Activated T-helper 1 cell treated with anti-CD3 and anti-CD28 coated beads, Interleukin-12 subunit alpha, Interleukin-12 subunit beta, Interleukin-2, Interleukin-4 antibody, amounts not matched to agents 30 ng/mL and 10 ng/mL and 1 ng/mL, durations not matched to agents 14 hours and 24 hours and 36 hours (primary cell): ENCODE measurements at regions of chr10 and their contacts with region 1.

Region 1: DNA sequence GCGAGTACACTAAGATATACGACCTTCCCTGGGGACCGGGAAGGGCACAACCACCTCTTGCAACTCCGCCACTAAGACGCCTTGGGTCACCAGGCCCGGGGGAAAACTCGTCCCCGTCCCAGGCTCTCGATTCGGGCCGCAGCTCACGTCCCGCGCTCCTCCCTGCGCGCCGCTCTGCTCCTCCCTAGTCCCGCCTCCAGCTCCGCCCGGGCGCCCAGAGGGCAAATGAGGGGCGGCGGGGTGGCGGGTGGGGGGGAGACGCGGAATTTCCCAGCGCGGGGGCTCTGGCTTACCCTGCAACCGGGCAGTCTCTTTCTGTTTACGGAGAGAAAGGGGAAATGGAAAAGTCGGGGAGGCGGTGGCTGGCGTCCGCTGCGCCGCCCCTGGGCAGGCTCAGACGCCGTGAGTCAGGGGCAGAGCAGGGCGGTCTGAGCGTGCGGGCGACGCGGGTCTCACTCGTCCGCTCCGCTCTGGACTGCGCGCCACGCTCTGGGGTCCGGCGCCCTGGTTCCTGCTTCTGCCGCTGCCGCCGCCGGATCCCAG is at the start of gene MAP3K8:
- DNase-seq: peak; percentile 87
- H3K4me3 Mint-ChIP-seq: peak within 1 kb of the TSS; percentile 94
- H3K27ac Mint-ChIP-seq: peak within 1 kb of the TSS; percentile 88
- H3K4me1 Mint-ChIP-seq: peaks cover 56% of the 10 kb centered on the region
- H3K27me3 Mint-ChIP-seq: no peaks in the 10 kb centered on the region
- total RNA-seq, gene MAP3K8: 34.7 and 37.5 TPM in 2 replicates

Region 2: DNA sequence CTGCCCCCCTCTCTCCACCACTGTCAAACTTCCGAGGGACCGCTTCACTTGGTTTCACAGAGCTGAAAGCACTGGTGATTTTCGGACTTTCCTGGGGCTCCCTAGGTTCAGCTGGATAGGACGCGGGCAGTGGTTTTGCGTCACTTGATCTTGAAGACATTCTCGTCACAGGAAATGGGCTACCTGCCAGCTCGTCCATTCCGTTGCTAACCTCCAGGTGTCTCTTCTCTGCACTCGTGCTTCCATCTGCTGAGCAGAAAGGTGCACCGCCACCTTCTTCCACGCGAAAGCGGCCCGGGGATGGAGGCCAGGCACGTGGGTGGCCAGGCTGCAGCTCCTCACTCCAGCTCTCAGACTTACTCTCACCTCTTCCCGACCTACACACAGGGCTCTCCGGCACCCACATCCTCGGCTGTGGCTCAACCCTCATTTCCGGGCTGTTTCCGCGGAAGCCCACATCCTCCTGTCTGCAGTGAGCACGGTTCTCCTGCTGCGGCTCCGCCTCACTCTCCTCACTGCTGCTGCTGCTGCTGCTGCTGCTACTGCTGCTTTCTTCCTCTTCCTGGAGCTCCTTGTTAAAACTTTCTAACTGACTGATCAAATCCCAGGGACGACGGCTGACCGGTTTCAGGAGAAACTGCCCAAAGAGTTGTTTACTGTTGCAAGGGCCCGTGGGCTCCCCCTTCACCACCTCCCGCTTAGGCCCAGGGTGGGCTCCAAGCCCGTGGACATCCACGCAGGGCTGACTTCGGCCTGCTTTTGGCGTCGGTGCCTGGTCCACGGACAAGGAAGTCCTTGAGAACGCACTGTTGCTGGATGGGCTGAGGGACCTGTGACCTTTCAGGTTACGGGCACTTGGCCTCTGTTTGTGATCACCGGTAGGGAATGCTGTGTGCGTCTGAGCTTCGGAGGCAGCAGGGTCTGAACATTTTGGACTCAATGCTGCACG is 406.5 kb before region 1 on chr10:
- intact Hi-C with region 1: loop called (anchors 1 kb)
- DNase-seq: peak; percentile 93
- H3K4me3 Mint-ChIP-seq: peak overlapping the region; percentile 73
- H3K27ac Mint-ChIP-seq: peak overlapping the region; percentile 93
- H3K4me1 Mint-ChIP-seq: peaks cover 45% of the 10 kb centered on the region
- H3K27me3 Mint-ChIP-seq: peaks cover 22% of the 10 kb centered on the region

Region 3: DNA sequence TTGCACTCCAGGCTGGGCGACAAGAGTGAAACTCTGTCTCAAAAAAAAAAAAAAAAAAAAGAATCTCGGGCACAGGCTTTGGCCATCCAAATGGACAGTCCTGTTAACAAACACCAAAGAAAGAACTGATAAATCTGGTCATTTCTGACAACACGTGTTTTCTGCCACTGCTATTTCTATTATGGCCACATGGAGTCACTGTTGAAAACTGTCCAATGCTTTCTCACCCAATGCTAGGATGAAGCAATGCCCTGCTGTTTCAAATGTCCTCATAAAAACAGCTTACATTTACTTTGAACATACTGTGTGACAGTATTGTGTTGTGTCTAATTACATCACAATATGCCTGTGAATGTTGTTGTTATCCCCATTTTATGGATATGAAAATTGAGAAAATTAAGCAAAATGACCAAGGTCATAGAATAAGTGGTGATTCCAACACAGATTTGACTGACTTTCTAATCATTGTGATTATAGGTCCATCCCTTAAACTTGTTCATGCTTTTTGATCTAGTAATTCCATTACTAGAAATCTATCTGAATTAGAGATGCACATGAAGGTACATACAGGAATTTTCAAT is 19.7 kb before region 1 on chr10:
- intact Hi-C with region 1: loop called (anchors 1 kb)
- DNase-seq: no peak
- H3K4me3 Mint-ChIP-seq: no peak overlapping the region
- H3K27ac Mint-ChIP-seq: no peak overlapping the region
- H3K4me1 Mint-ChIP-seq: peaks cover 34% of the 10 kb centered on the region
- H3K27me3 Mint-ChIP-seq: no peaks in the 10 kb centered on the region

Region 4: GRCh38 chr10:30456266-30456665 is 22.5 kb after region 1 on chr10:
- intact Hi-C with region 1: loop called (anchors 2 kb)
- DNase-seq: peak; percentile 14
- H3K4me3 Mint-ChIP-seq: peak overlapping the region; percentile 37
- H3K27ac Mint-ChIP-seq: peak overlapping the region; percentile 51
- H3K4me1 Mint-ChIP-seq: peaks cover 47% of the 10 kb centered on the region
- H3K27me3 Mint-ChIP-seq: no peaks in the 10 kb centered on the region

Region 5: GRCh38 chr10:30529373-30529998 is 95.7 kb after region 1 on chr10:
- intact Hi-C with region 1: loop called (anchors 1 kb)
- DNase-seq: peak; percentile 79
- H3K4me3 Mint-ChIP-seq: peak overlapping the region; percentile 81
- H3K27ac Mint-ChIP-seq: peak overlapping the region; percentile 89
- H3K4me1 Mint-ChIP-seq: peaks cover 74% of the 10 kb centered on the region
- H3K27me3 Mint-ChIP-seq: no peaks in the 10 kb centered on the region

Region 6: DNA sequence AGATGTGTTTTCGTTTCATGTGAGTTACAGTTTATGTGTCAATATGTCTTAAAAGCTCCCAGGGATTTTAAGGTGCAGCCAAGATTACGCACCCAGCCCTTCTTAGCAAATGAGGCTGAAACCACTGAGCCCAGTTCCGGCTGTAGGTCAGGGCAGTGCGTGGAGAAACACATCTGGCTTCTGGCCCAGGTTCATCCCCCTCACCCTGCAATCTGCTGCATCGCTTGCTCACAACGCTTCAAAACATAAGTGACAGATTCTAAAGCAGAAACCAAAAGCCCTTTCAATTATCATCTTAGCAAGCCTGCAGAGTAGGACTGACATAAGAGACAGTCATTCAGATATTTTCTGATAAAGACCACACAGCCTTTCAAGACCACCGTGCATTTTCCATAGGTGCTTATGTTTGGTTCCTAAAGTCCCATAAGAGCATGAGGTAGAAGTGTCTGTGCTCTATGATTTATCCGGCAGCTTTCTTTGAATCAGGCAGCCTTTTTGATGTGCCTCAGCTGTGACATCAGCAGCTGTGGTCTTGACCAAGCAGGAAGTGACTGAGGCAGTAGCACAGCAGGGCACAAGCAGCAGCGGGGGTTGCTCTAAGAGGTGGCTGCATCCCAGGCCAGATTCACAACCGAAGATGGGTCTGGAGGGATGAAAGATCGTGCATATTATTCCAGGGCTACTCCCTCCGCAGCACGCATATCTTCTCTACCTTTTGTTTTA is 267.8 kb after region 1 on chr10:
- intact Hi-C with region 1: loop called (anchors 1 kb)
- DNase-seq: peak; percentile 74
- H3K4me3 Mint-ChIP-seq: peak overlapping the region; percentile 73
- H3K27ac Mint-ChIP-seq: peak overlapping the region; percentile 94
- H3K4me1 Mint-ChIP-seq: peaks cover 91% of the 10 kb centered on the region
- H3K27me3 Mint-ChIP-seq: no peaks in the 10 kb centered on the region